HEK293 (cell line): ENCODE measurements at regions of chr7 and their contacts with region 1.

Region 1: DNA sequence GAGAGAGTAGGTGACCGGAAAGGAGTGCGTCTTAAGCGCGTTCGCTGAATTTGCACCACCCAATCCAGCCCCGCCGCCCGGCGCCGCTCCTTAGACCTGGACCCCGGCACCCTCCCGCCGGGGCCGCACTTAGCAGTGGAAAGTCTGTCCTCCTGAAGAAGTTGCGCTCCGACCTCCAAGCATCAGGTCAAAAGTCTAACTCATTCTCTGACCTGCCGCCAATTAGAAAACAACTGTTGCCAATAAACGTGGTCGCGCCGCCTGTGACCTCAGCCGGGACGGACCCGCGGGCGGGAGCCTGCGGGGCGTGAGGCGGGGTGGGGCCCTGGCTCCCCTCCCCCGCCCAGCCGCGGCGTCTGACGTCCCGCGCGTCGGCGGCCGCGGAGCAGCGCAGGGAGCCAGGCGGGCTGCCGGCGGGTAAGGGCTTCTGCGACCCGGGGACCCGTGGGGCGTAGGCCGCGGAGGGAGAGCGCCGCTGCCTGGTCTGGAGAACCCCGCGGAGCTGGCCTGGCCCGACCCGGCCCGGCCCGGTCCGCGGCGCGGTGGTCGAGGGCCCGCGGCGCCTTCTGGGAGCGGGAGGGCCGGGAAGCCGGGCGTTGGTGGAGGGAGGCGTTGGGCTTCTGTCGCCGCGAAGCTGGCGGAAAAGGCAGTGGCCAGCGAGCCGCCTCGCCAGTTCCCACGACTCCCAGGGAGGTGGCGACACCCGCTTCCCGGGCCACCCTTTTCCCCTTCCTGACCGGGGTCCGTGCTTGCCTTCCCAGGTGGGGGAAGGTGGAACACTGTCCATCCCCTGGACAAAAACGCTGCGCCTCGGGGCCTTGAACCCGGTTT is at the start of gene BCAP29:
- H3K4me3 ChIP-seq: peak within 1 kb of the TSS; percentile 77
- H3K27ac ChIP-seq: peak within 1 kb of the TSS; percentile 73
- H3K4me1 ChIP-seq: no peaks in the 10 kb centered on the region
- CTCF ChIP-seq: peak; percentile 77

Region 2: DNA sequence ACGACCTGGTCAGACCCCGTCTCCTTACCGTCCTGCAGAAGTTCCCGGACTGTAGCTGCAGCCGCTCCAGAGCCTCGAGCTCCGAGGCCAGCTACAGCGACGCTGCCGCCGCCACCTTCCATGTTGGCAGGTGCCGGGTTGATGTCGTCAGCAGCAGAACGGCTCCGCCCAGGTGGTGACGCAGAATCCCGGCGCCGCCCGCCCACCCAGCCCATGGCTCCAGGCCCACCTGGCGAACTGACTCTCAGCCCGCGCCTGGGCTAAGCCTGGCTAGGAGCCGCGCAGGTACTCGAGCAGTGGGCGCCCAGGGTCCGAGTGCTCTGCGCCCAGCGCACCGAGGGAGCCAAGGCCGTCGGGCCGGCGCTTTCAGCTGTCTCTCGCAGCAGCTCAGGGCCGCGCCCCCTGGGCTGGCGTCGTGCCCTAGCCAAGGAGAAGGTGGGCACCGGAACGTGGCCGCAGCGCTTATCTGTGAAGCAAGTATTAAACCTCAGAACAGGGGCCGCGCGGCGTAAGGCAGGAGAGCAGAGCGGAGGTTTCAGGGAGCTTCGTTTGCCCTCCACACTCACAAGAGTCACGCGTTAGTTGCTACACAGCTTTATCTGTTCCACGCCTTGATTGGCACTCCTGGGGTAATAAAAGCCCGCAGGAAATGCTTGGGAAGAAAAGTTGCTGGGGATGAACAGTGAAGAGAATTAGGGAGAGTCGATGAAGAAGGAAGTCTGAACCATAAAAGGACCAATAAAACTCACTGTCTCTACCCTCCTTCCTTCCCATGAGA is 16.1 kb before region 1 on chr7 and contains the starts of genes COG5 and DUS4L:
- CTCF ChIA-PET with region 1: interaction called, 6 read pairs
- POLR2A ChIA-PET with region 1: interaction called, 15 read pairs
- H3K4me3 ChIP-seq: peak within 1 kb of the TSS; percentile 84
- H3K27ac ChIP-seq: peak within 1 kb of the TSS; percentile 63
- H3K4me1 ChIP-seq: no peaks in the 10 kb centered on the region; the same call in 1 of the 2 replicates
- CTCF ChIP-seq: no peak